ENCODE measurements at regions of chr6 and their contacts with region 1.

Region 1: GRCh38 chr6:134123666-134124208 is 71.3 kb upstream of the SLC2A12 start:
- DNase-seq: no peak
- H3K4me3 ChIP-seq: no peak overlapping the region
- H3K27ac ChIP-seq: no peak overlapping the region
- H3K4me1 ChIP-seq: no peaks in the 10 kb centered on the region
- H3K27me3 ChIP-seq: no peaks in the 10 kb centered on the region
- CTCF ChIP-seq: peak; percentile 29 to 75 (median 61)
- POLR2A ChIP-seq: no peak

Region 2: GRCh38 chr6:134949927-134950326 is 826.2 kb after region 1 on chr6 and contains the start of gene ALDH8A1:
- intact Hi-C with region 1: loop called (anchors 10 kb)
- DNase-seq: no peak
- H3K4me3 ChIP-seq: no peak within 1 kb of the TSS
- H3K27ac ChIP-seq: no peak within 1 kb of the TSS
- H3K4me1 ChIP-seq: no peaks in the 10 kb centered on the region
- H3K27me3 ChIP-seq: no peaks in the 10 kb centered on the region
- CTCF ChIP-seq: no peak
- POLR2A ChIP-seq: no peak
- total RNA-seq, gene ALDH8A1: 0.52 to 5.7 (median 1.2) TPM

Measured in spleen (tissue), 13 donors.